ENCODE measurements at regions of chrX and their contacts with region 1.

Region 1: GRCh38 chrX:20530406-20530921 is 263.8 kb upstream of the RPS6KA3 start:
- DNase-seq: peak; percentile 19
- H3K4me3 Mint-ChIP-seq: no peak overlapping the region
- H3K27ac Mint-ChIP-seq: no peak overlapping the region
- H3K4me1 Mint-ChIP-seq: peaks cover 11% of the 10 kb centered on the region
- H3K27me3 Mint-ChIP-seq: peaks cover 41% of the 10 kb centered on the region

Region 2: DNA sequence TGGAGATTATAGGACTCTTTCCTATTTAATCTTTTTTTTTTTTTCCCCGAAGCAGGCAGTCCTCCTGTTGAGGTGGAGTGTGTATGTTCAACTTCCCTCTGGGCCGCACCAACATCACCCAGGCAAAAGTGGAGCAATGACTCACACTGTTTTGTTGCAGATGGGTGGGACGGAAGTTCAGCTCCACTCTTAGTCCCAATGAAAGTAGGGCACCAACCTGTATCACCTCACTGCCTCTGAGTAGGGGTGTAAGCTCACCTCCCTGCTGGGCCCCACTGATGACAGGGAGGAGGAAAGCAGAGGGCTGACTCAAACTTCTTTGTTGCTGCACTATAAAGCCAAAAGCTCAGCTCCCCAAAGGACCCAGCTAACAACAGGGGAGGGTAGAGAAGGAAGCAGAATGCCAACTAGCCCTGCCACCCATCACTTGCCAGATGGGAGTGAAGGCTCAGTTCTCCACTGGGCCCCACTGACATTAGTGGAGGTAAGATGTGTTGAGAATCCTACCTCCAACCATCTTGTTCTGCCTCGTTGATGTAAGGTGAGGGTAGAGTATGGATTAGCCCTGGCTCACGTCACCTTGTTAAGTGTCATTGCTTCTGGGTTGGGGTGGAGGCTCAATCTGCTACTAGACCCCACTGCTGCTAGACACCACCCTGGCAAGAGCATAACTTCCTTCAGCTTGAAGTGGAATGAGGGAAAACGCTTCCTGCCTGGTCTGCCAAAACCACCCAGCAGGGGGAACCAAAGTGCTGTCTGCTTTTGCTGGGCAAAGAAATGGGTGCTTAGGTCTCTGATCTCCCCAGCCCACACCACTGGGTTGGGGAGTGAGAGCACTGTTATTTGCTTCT is 277.9 kb before region 1 on chrX:
- intact Hi-C with region 1: loop called (anchors 2 kb)
- DNase-seq: peak; percentile 49
- H3K4me3 Mint-ChIP-seq: no peak overlapping the region
- H3K27ac Mint-ChIP-seq: peak overlapping the region; percentile 65
- H3K4me1 Mint-ChIP-seq: peaks cover 46% of the 10 kb centered on the region
- H3K27me3 Mint-ChIP-seq: no peaks in the 10 kb centered on the region

Region 3: DNA sequence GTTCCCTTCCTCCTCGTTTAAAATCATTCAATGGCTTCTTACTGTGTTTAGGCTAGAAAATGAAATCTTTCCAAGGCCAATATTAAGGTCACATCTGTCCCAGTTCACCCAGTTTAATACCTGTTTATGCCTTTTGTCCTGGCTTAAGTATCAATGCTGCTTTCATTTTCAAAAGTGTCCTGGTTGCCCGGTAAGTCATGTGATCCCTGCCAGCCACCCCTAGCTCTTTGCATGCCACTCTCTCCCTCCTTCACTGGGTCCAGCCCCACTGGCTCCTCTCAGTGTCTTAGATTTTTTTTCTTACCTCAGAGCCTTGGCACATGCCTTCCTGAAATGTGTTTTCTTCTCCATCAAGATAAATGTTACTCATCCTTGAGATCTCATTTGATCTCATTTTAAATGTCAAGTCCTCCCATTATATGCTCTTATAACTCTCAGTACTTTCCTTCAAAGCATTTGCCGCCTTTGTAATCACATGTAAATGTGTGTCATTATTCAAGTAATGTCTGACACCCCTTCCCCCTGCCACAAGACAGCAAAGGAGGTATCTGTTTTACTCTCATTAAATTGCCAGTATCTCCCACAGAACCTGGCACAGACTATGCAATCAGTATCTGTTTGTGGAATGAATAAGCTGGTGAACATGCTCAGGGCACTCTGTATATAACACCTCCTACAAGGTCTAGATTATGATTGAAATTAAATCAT is 208.7 kb after region 1 on chrX:
- intact Hi-C with region 1: loop called (anchors 5 kb)
- DNase-seq: no peak
- H3K4me3 Mint-ChIP-seq: no peak overlapping the region
- H3K27ac Mint-ChIP-seq: no peak overlapping the region
- H3K4me1 Mint-ChIP-seq: no peaks in the 10 kb centered on the region
- H3K27me3 Mint-ChIP-seq: peaks cover 3% of the 10 kb centered on the region

Region 4: DNA sequence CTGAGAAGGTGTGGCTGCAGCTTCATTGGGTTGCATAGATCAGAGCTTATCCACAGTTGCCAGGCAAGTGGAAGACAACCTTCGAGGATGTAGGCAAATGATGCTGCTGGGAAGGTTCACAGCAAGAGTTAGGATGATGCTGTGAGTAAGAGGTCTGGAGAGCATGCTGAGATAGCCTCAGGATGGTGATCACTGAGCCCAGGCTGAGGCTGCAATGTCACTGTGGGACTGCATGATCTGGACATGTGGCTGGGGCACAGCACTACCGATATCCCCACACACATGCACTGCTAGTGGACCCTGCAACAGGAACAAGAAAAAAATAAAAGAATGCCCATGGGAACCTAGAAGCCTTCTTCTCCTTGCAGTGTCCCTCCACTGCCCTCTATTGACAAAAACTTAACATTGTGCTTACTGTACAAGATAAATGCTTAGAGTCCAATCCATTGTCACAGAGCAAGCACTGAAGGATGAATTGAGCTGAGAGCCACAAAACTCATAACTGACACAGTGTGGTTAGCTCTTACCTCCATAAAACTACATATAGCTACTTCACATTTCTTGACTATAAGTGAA is 949.3 kb after region 1 on chrX:
- intact Hi-C with region 1: loop called (anchors 2 kb)
- DNase-seq: no peak
- H3K4me3 Mint-ChIP-seq: no peak overlapping the region
- H3K27ac Mint-ChIP-seq: no peak overlapping the region
- H3K4me1 Mint-ChIP-seq: no peaks in the 10 kb centered on the region
- H3K27me3 Mint-ChIP-seq: peaks cover 2% of the 10 kb centered on the region

Region 5: DNA sequence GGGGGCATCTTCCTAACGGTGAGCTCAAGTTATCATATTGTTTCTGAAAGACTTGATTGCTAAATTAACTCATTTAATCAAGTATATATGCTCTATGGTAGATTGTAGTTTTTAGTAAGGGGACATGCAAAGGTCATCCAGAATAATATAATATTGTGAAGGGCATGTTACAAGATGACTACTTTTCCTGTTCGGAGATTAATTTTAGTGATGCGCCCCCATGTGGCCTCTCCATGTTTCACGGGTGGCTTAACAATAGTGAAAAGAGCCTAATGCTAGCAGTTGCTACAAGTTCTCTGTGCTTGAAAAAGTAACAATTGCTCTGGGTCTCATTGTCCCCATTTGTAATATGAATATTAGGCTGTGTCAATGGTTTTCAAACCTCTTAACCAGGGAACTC is 1215.3 kb after region 1 on chrX:
- intact Hi-C with region 1: loop called (anchors 1 kb)
- DNase-seq: peak; percentile 1
- H3K4me3 Mint-ChIP-seq: no peak overlapping the region
- H3K27ac Mint-ChIP-seq: no peak overlapping the region
- H3K4me1 Mint-ChIP-seq: no peaks in the 10 kb centered on the region
- H3K27me3 Mint-ChIP-seq: peaks cover 8% of the 10 kb centered on the region

Region 6: DNA sequence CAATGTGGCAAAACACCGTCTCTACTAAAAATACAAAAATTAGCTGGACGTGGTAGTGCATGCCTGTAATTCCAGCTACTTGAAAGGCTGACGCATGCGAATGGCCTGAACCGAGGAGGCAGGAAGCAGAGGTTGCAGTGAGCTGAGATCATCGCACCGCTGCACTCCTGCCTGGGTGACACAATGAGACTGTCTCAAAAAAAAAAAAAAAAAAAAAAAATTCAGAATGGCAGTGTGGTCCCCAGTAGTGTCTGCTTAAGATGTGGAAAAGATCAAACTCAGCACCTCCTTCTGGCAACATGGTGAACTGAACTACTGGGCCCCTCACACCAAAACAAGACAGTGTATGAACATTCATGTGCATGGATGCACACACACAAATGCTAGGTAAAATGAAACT is 1442.3 kb after region 1 on chrX:
- intact Hi-C with region 1: loop called (anchors 5 kb)
- DNase-seq: peak; percentile 20
- H3K4me3 Mint-ChIP-seq: peak overlapping the region; percentile 72
- H3K27ac Mint-ChIP-seq: peak overlapping the region; percentile 90
- H3K4me1 Mint-ChIP-seq: peaks cover 45% of the 10 kb centered on the region
- H3K27me3 Mint-ChIP-seq: no peaks in the 10 kb centered on the region

Measured in activated T-helper 1 cell treated with anti-CD3 and anti-CD28 coated beads, Interleukin-12 subunit alpha, Interleukin-12 subunit beta, Interleukin-2, Interleukin-4 antibody, amounts not matched to agents 30 ng/mL and 10 ng/mL and 1 ng/mL, durations not matched to agents 14 hours and 24 hours and 36 hours (primary cell).